Pancreas (tissue), 10 donors: ENCODE measurements at regions of chr15 and their contacts with region 1.

Region 1: GRCh38 chr15:38440353-38441129 is 13.4 kb upstream of the FAM98B start:
- DNase-seq: peak in 5 of 6 donors; percentile 43 to 67 (median 56)
- ATAC-seq: peak; percentile 72 to 99 (median 96)
- H3K4me3 ChIP-seq: no peak overlapping the region
- H3K27ac ChIP-seq: no peak overlapping the region
- H3K4me1 ChIP-seq: no peaks in the 10 kb centered on the region
- H3K27me3 ChIP-seq: peaks cover 0 to 5% (median 0%) of the 10 kb centered on the region in 4 donors
- CTCF ChIP-seq: peak; percentile 78 to 96 (median 92)

Region 2: DNA sequence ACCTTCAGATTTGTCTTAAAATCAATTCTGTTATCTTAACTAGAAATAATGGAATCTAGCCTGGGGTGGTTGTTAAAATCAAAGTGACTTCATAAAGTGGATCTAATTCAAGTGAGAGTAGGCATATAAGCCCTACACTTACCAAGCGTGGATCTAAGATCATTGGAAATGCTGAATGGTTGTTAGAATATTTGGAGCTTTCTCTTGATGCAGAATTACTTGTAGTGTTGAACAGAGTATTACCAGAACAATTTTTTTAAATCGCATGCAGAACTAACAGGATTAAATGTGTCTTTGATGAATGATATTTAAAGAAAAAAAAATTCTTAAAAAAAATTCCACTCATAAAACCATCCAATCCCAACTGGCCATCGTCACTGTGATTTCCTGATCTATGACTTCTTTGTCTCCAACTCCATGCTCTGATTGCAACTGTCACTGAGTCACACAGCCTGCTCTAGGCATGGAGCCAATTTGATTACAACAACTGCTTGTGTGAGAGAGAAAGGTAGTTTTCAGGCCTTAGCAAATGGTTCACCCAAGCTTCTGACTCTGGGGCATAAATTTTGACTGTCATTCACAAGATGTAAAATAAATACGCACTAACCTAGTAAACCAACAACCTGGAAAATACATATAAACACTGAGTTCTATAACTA is 213.8 kb before region 1 on chr15:
- intact Hi-C with region 1: no loop called
- DNase-seq: peak in 3 of 6 donors; percentile 46 to 61 (median 48)
- ATAC-seq: peak; percentile 71 to 91 (median 90)
- H3K4me3 ChIP-seq: no peak overlapping the region
- H3K27ac ChIP-seq: peak overlapping the region in 3 of 4 donors; percentile 1 to 63 (median 59)
- H3K4me1 ChIP-seq: peaks cover 0 to 6% (median 0%) of the 10 kb centered on the region in 3 donors
- H3K27me3 ChIP-seq: no peaks in the 10 kb centered on the region
- CTCF ChIP-seq: no peak

Region 3: GRCh38 chr15:38508647-38509046 is 68.1 kb after region 1 on chr15:
- intact Hi-C with region 1: no loop called
- DNase-seq: no peak
- ATAC-seq: no peak
- H3K4me3 ChIP-seq: no peak overlapping the region
- H3K27ac ChIP-seq: no peak overlapping the region
- H3K4me1 ChIP-seq: no peaks in the 10 kb centered on the region
- H3K27me3 ChIP-seq: no peaks in the 10 kb centered on the region
- CTCF ChIP-seq: no peak

Region 4: GRCh38 chr15:38699633-38700230 is 259.2 kb after region 1 on chr15:
- intact Hi-C with region 1: loop called in 1 of 3 experiments (anchors 10 kb)
- DNase-seq: peak in 5 of 6 donors; percentile 40 to 63 (median 49)
- ATAC-seq: peak; percentile 52 to 60 (median 56)
- H3K4me3 ChIP-seq: no peak overlapping the region
- H3K27ac ChIP-seq: no peak overlapping the region
- H3K4me1 ChIP-seq: peaks cover 11 to 21% (median 15%) of the 10 kb centered on the region in 3 donors
- H3K27me3 ChIP-seq: no peaks in the 10 kb centered on the region
- CTCF ChIP-seq: peak; percentile 66 to 88 (median 81)